A549 (cell line): ENCODE measurements at regions of chr11 and their contacts with region 1.

Region 1: GRCh38 chr11:69918938-69919650 is 99.9 kb upstream of the FGF3 start:
- DNase-seq: peak; percentile 65 to 68
- ATAC-seq: peak; percentile 32 to 85; a peak in 5 of 6 replicates
- H3K4me3 ChIP-seq: no peak overlapping the region
- H3K27ac ChIP-seq: peak overlapping the region; percentile 31 to 33; a peak in 1 of 6 replicates
- H3K4me1 ChIP-seq: peaks cover 8% of the 10 kb centered on the region; the same call in 1 of the 3 replicates
- CTCF ChIP-seq: peak; percentile 94
- EP300 ChIP-seq: no peak
- POLR2A ChIP-seq: no peak
- RAD21 ChIP-seq: peak; percentile 87 to 94

Region 2: DNA sequence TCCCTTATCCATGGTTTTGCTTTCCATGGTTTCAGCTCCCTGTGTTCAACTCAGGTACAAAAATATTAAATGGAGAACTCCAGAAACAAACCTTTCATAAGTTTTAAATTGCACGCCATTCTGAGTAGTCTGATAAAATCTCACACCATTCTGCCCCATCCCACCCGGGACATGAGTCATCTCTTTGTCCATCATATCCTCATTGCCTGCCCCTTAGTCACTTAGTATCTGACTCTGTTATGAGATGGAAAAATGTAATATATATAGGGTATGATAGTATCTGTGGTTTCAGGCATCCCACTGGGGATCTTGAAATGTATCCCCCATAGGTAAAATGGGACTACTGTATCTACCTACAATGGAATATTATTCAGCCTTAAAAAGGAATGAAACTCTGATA is 64.4 kb before region 1 on chr11:
- CTCF ChIA-PET with region 1: no interaction called
- POLR2A ChIA-PET with region 1: no interaction called
- DNase-seq: peak; percentile 18 to 27
- ATAC-seq: peak; percentile 57 to 74; a peak in 4 of 6 replicates
- H3K4me3 ChIP-seq: no peak overlapping the region
- H3K27ac ChIP-seq: no peak overlapping the region
- H3K4me1 ChIP-seq: no peaks in the 10 kb centered on the region
- CTCF ChIP-seq: no peak
- EP300 ChIP-seq: no peak
- POLR2A ChIP-seq: no peak
- RAD21 ChIP-seq: no peak

Region 3: DNA sequence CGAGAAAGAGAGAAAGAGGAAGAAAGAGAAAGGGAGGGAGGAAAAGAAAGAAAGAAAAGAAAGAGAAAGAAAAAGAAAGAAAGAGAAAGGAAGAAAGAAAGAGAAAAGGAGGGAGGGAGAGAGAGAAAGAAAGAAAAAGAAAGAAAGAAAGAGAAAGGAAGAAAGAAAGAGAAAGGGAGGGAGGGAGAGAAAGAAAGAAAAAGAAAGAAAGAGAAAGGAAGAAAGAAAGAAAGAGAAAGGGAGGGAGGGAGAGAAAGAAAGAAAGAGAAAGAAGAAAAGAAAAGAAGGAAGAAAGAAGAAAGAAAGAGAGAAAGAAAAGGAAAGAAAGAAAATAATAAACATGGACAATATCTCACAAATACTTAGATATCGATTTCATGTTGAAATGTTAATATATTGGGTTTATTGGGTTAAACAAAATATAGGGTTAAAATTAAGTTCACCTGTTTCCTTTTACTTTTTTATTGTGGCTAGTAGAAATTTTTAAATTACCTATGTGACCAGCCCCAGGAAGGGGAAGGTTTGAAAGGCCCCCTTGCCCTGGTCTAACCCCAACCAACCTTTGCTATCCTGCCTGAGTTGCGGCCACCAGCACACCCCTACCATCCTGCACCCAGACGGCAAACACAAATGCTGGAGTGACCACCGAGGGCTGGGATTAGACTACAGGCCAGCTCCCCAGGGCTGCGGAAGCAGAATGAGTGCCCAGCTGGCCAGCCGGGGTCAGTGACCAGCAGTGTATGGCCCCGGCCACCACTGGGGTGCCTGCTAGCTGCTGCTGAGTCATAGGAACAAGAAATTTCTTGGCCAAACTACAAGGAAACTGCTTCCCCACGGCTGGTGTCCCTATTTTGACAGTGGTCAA is 18.9 kb before region 1 on chr11:
- CTCF ChIA-PET with region 1: interaction called, 42 read pairs
- POLR2A ChIA-PET with region 1: no interaction called
- DNase-seq: peak in 1 of 2 experiments; percentile 56
- ATAC-seq: peak; percentile 65 to 81; a peak in 5 of 6 replicates
- H3K4me3 ChIP-seq: no peak overlapping the region
- H3K27ac ChIP-seq: peak overlapping the region; percentile 33 to 75; a peak in 5 of 6 replicates
- H3K4me1 ChIP-seq: peaks cover 16% of the 10 kb centered on the region
- CTCF ChIP-seq: no peak
- EP300 ChIP-seq: no peak
- POLR2A ChIP-seq: no peak
- RAD21 ChIP-seq: no peak

Region 4: DNA sequence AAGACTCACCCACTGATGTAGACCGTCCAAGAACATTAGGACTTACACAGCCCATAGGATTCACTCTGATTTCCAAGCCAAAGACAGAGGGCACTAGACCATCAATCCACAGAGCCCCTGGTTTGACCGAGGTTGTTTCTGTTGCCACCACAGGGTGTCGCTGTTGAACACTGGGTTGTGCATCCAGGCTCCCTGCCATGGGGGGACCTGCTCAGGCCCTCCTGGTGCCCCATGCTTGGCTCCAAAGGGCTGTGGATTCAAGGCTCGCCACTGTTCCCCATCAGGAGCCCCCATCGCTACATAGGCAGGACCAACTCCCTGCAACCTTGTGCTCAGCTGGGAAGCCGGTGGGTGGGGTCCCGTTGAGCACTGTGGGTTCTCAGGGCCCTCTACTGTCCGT is 31.0 kb after region 1 on chr11:
- CTCF ChIA-PET with region 1: interaction called, 17 read pairs
- POLR2A ChIA-PET with region 1: no interaction called
- DNase-seq: peak; percentile 52 to 68
- ATAC-seq: peak in 1 of 2 experiments; percentile 21; a peak in 3 of 6 replicates
- H3K4me3 ChIP-seq: no peak overlapping the region
- H3K27ac ChIP-seq: peak overlapping the region; percentile 88 to 93
- H3K4me1 ChIP-seq: peaks cover 29% of the 10 kb centered on the region
- CTCF ChIP-seq: peak; percentile 38
- EP300 ChIP-seq: no peak
- POLR2A ChIP-seq: no peak
- RAD21 ChIP-seq: peak in 1 of 2 experiments; percentile 47; a peak in 2 of 5 replicates

Region 5: DNA sequence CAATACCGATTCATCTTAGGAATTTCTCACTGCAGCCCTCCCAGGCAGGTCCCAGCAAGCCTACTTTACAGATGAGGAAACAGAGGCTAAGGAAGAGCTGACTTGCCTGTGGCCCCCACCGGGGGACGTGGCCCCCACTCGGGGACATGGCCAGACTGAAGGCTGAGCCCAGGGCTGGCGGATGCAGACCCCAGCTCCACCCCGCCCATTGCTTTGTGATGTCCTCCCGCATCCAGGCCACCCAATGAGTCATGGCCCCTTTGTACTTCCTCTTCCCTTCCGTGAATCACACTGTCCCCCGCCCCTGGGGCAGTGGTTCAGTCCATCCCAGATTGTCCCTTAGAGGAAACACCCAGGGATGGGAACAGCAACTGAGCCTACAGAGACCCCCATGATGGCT is 43.1 kb after region 1 on chr11:
- CTCF ChIA-PET with region 1: interaction called, 18 read pairs
- POLR2A ChIA-PET with region 1: no interaction called
- DNase-seq: peak; percentile 59 to 67
- ATAC-seq: peak; percentile 48 to 68; a peak in 3 of 6 replicates
- H3K4me3 ChIP-seq: no peak overlapping the region
- H3K27ac ChIP-seq: peak overlapping the region; percentile 40 to 52; a peak in 4 of 6 replicates
- H3K4me1 ChIP-seq: peaks cover 16% of the 10 kb centered on the region; the same call in 2 of the 3 replicates
- CTCF ChIP-seq: no peak
- EP300 ChIP-seq: no peak
- POLR2A ChIP-seq: no peak
- RAD21 ChIP-seq: no peak

Region 6: GRCh38 chr11:70202898-70203748 is 284.0 kb after region 1 on chr11 and contains the start of gene FADD:
- CTCF ChIA-PET with region 1: interaction called, 233 read pairs
- POLR2A ChIA-PET with region 1: no interaction called
- DNase-seq: peak; percentile 84 to 93
- ATAC-seq: peak; percentile 82 to 89
- H3K4me3 ChIP-seq: peak within 1 kb of the TSS; percentile 96
- H3K27ac ChIP-seq: peak within 1 kb of the TSS; percentile 97
- H3K4me1 ChIP-seq: peaks cover 28% of the 10 kb centered on the region
- CTCF ChIP-seq: no peak
- EP300 ChIP-seq: no peak
- POLR2A ChIP-seq: peak; percentile 75
- RAD21 ChIP-seq: no peak
- polyA plus RNA-seq, gene FADD: 30.2 and 34.7 TPM in 2 replicates